ENCODE measurements at regions of chr17 and their contacts with region 1.

Region 1: DNA sequence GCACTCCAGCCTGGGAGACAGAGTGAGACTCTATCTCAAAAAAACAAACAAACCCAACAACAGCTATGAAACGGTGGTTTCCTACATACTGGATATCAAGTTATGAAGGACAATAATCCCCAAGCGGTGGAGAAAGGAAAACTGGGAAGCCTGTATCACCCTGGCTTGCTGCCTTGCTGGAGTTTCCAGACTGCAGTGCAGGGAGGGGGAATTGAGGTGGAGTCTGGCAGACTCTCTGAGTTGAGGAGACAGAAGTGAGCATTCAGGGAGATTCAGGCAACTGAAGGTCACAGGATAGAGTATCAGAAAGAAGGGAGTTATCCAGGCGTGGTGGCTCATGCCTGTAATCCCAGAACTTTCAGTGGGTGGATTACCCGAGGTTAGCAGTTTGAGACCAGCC is 11.9 kb downstream of the QRICH2 start:
- DNase-seq: no peak
- ATAC-seq: no peak
- H3K4me3 Mint-ChIP-seq: no peak overlapping the region
- H3K27ac Mint-ChIP-seq: no peak overlapping the region
- H3K4me1 Mint-ChIP-seq: no peaks in the 10 kb centered on the region
- H3K27me3 Mint-ChIP-seq: no peaks in the 10 kb centered on the region

Region 2: GRCh38 chr17:76121932-76122430 is 174.2 kb before region 1 on chr17:
- CTCF ChIA-PET with region 1: interaction called, 7 read pairs
- POLR2A ChIA-PET with region 1: no interaction called
- intact Hi-C with region 1: loop called (anchors 1 to 5 kb)
- DNase-seq: peak; percentile 61
- ATAC-seq: peak; percentile 20
- H3K4me3 Mint-ChIP-seq: no peak overlapping the region
- H3K27ac Mint-ChIP-seq: peak overlapping the region; percentile 80
- H3K4me1 Mint-ChIP-seq: peaks cover 14% of the 10 kb centered on the region
- H3K27me3 Mint-ChIP-seq: no peaks in the 10 kb centered on the region

Region 3: DNA sequence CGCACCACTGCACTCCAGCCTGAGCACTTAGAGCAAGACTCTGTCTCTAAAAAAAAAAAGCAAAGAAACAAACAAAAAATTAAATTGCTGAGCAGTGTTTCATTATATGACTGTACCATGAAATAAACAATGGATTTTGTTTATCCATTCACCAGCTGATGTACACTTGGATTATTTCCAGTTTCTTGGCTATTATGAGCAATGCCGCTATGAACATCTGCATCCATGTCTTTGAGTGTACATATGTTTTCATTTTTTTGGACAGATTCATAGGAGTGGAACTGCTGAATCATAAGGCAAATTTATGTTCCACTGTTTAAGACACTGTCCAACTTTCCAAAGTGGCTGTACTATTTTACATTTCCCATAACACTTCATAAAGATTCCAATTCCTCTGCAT is 63.8 kb before region 1 on chr17:
- CTCF ChIA-PET with region 1: no interaction called
- POLR2A ChIA-PET with region 1: no interaction called
- intact Hi-C with region 1: no loop called
- DNase-seq: no peak
- ATAC-seq: no peak
- H3K4me3 Mint-ChIP-seq: no peak overlapping the region
- H3K27ac Mint-ChIP-seq: no peak overlapping the region
- H3K4me1 Mint-ChIP-seq: peaks cover 41% of the 10 kb centered on the region
- H3K27me3 Mint-ChIP-seq: no peaks in the 10 kb centered on the region

Region 4: GRCh38 chr17:76432712-76433336 is 136.6 kb after region 1 on chr17:
- CTCF ChIA-PET with region 1: no interaction called
- POLR2A ChIA-PET with region 1: no interaction called
- intact Hi-C with region 1: no loop called
- DNase-seq: no peak
- ATAC-seq: peak; percentile 44
- H3K4me3 Mint-ChIP-seq: no peak overlapping the region
- H3K27ac Mint-ChIP-seq: no peak overlapping the region
- H3K4me1 Mint-ChIP-seq: peaks cover 2% of the 10 kb centered on the region
- H3K27me3 Mint-ChIP-seq: no peaks in the 10 kb centered on the region

Measured in activated CD4-positive, alpha-beta T cell treated with anti-CD3 and anti-CD28 coated beads for 36 hours (primary cell).